ENCODE measurements at regions of chr2 and their contacts with region 1.

Region 1: DNA sequence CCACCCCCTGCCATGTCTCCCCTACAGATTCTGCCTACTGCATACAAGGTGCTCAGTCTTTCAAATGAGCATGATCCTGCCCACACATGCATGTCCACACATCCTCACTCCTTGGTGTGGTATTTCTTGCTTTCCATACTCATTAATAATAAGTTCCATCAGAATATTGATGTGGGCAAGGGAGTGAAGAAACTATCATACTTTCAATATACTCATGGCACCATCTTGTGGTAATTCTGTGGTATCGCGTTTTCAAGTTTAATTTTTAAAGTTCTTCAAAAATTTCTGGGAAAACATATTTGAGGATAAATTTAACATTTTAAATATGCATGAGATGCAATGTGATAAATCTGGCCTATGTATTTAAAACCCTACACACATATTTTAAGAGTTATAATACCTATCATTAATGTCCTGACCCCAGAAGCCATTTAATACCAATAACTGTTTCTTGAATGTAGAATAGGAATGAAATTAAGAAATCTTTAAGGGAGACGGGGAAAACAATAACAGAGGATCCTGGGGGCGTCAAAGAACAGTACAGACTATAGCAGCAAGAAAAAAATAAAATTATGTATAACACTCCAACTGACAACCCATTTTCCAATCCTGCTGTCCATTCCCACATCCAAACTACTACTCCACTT is 110.1 kb downstream of the ZNF385B start:
- DNase-seq: peak in 2 of 4 experiments; percentile 11 to 44
- ATAC-seq: peak; percentile 59; the same call in 2 of the 3 replicates
- H3K4me3 ChIP-seq: no peak overlapping the region
- H3K27ac ChIP-seq: no peak overlapping the region
- H3K4me1 ChIP-seq: no peaks in the 10 kb centered on the region
- H3K27me3 ChIP-seq: no peaks in the 10 kb centered on the region
- CTCF ChIP-seq: peak; percentile 39 to 79 (median 56); a peak in 4 of 6 replicates
- EP300 ChIP-seq: no peak
- POLR2A ChIP-seq: no peak
- RAD21 ChIP-seq: peak; percentile 74 to 87

Region 2: GRCh38 chr2:178700922-178701342 is 1050.4 kb before region 1 on chr2:
- CTCF ChIA-PET with region 1: no interaction called
- POLR2A ChIA-PET with region 1: no interaction called
- in situ Hi-C with region 1: no loop called
- intact Hi-C with region 1: loop called (anchors 5 kb)
- DNase-seq: peak; percentile 44 to 49 (median 48)
- ATAC-seq: peak; percentile 67
- H3K4me3 ChIP-seq: no peak overlapping the region
- H3K27ac ChIP-seq: no peak overlapping the region
- H3K4me1 ChIP-seq: no peaks in the 10 kb centered on the region
- H3K27me3 ChIP-seq: 0 out of 5 replicates have a peak, but pooled peaks cover 0 to 3% of the 10 kb centered on the region in 2 experiments
- CTCF ChIP-seq: peak; percentile 66 to 87 (median 87)
- EP300 ChIP-seq: no peak
- POLR2A ChIP-seq: no peak
- RAD21 ChIP-seq: peak; percentile 33 to 61

Region 3: DNA sequence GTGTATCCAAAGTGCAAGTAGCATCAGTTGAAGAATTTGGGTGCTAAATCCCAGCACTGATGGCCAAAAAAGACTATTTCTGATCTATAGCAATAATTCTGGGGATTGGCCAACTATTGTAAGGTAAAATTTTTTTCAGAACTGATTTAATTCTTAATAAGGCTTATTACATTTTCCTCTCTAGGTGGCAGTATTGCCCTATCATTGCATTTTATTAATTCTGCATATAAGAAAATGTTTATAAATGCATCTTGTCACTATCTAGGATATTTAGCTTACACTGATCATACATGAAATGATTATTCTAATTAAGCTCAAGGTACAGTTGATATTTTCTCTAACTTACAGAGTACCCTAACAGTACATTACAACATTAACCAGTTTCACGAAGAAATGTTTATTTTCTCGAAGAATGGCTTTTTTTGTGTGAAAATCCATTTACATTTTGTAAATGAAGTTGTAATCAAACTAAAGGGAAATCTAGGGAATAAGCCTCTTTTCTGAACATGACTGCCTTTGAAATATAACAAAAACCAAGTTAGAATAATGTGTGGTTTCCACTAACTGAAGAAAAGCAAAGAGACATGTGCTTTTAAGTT is 955.1 kb before region 1 on chr2:
- CTCF ChIA-PET with region 1: no interaction called
- POLR2A ChIA-PET with region 1: no interaction called
- in situ Hi-C with region 1: no loop called
- intact Hi-C with region 1: loop called (anchors 2 kb)
- DNase-seq: peak in 2 of 4 experiments; percentile 16 to 19
- ATAC-seq: no peak
- H3K4me3 ChIP-seq: no peak overlapping the region
- H3K27ac ChIP-seq: no peak overlapping the region
- H3K4me1 ChIP-seq: no peaks in the 10 kb centered on the region
- H3K27me3 ChIP-seq: peaks cover 4 to 8% of the 10 kb centered on the region in 2 experiments; a peak in 3 of 5 replicates
- CTCF ChIP-seq: peak; percentile 31 to 75 (median 42); a peak in 3 of 6 replicates
- EP300 ChIP-seq: no peak
- POLR2A ChIP-seq: no peak
- RAD21 ChIP-seq: peak; percentile 65 to 82

Region 4: GRCh38 chr2:178914259-178914849 is 836.9 kb before region 1 on chr2:
- CTCF ChIA-PET with region 1: no interaction called
- POLR2A ChIA-PET with region 1: no interaction called
- in situ Hi-C with region 1: no loop called
- intact Hi-C with region 1: loop called (anchors 10 kb)
- DNase-seq: peak; percentile 65 to 83 (median 72)
- ATAC-seq: peak; percentile 99
- H3K4me3 ChIP-seq: no peak overlapping the region
- H3K27ac ChIP-seq: no peak overlapping the region
- H3K4me1 ChIP-seq: no peaks in the 10 kb centered on the region
- H3K27me3 ChIP-seq: no peaks in the 10 kb centered on the region
- CTCF ChIP-seq: peak; percentile 85 to 89 (median 87)
- EP300 ChIP-seq: no peak
- POLR2A ChIP-seq: no peak
- RAD21 ChIP-seq: peak; percentile 77 to 85

Region 5: DNA sequence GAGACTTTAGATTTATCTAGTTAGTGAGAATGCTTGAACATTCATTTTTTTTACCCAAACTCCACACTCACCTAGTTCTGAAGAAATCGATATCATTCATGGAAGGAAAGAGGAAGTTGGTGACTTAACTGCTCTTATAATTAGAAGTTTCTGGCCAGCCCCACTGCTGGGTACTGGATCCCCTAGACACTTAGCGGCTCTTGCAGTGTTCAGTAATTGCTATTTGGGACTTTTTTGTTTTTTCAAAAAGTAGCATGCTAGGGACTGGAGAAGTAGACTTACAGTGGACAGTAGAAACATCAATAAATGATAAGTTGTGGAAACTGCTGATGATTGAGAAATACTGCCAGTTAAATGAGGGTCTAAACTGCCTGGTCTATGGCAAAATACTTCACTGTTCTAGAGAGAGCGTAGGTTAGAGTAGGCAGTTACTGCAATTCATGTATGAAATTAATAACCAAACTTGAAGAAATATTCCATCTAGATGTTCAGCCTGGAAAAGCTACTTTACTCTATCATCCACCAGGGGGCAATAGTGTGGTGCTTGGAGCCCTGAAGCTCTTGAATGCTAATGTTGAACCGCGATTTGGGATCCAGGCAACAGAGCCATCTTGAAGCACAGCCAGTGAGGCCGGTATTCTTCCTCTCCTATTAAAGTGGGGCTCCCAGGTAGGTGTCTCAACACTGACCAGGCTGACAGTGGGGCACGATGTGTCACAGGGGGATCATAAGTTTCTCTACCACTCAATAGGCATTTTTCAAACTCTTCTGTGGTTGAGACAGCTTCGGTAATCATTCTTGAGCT is 340.5 kb before region 1 on chr2:
- CTCF ChIA-PET with region 1: no interaction called
- POLR2A ChIA-PET with region 1: no interaction called
- in situ Hi-C with region 1: no loop called
- intact Hi-C with region 1: loop called (anchors 1 kb)
- DNase-seq: peak; percentile 27 to 59 (median 31)
- ATAC-seq: peak; percentile 77
- H3K4me3 ChIP-seq: no peak overlapping the region
- H3K27ac ChIP-seq: no peak overlapping the region
- H3K4me1 ChIP-seq: no peaks in the 10 kb centered on the region
- H3K27me3 ChIP-seq: no peaks in the 10 kb centered on the region
- CTCF ChIP-seq: peak; percentile 50 to 61 (median 58); a peak in 5 of 6 replicates
- EP300 ChIP-seq: no peak
- POLR2A ChIP-seq: no peak
- RAD21 ChIP-seq: peak; percentile 39 to 54; a peak in 3 of 4 replicates

Region 6: DNA sequence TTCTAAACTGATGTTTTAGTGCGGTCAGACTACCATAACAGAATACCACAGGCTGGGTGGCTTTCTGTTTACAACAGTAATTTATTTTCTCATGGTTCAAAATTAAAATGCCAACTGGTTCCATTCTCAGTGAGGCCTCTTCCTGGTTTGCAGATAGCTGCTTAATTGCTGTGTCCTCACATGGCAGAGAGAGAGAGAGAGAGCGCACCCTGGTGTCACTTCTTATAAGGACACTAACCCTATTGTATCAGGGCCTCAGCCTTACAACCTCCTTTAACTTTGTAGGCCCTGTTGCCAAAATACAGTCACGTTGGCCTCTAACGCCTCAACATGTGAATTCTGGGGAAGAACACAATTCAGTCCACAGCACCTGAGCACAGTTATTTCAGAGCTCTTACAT is 147.6 kb after region 1 on chr2:
- CTCF ChIA-PET with region 1: no interaction called
- POLR2A ChIA-PET with region 1: no interaction called
- in situ Hi-C with region 1: no loop called
- intact Hi-C with region 1: loop called (anchors 5 kb)
- DNase-seq: peak; percentile 24 to 74 (median 30)
- ATAC-seq: peak; percentile 100
- H3K4me3 ChIP-seq: no peak overlapping the region
- H3K27ac ChIP-seq: no peak overlapping the region
- H3K4me1 ChIP-seq: no peaks in the 10 kb centered on the region
- H3K27me3 ChIP-seq: no peaks in the 10 kb centered on the region
- CTCF ChIP-seq: peak; percentile 56 to 73 (median 64)
- EP300 ChIP-seq: no peak
- POLR2A ChIP-seq: no peak
- RAD21 ChIP-seq: peak; percentile 44 to 67

Region 7: GRCh38 chr2:180656455-180656847 is 905.2 kb after region 1 on chr2:
- CTCF ChIA-PET with region 1: no interaction called
- POLR2A ChIA-PET with region 1: no interaction called
- in situ Hi-C with region 1: no loop called
- intact Hi-C with region 1: no loop called
- DNase-seq: no peak
- ATAC-seq: no peak
- H3K4me3 ChIP-seq: no peak overlapping the region
- H3K27ac ChIP-seq: no peak overlapping the region
- H3K4me1 ChIP-seq: no peaks in the 10 kb centered on the region
- H3K27me3 ChIP-seq: no peaks in the 10 kb centered on the region
- CTCF ChIP-seq: no peak
- EP300 ChIP-seq: no peak
- POLR2A ChIP-seq: no peak
- RAD21 ChIP-seq: no peak

Measured in K562 (cell line).